ENCODE measurements at regions of chr4 and their contacts with region 1.

Region 1: DNA sequence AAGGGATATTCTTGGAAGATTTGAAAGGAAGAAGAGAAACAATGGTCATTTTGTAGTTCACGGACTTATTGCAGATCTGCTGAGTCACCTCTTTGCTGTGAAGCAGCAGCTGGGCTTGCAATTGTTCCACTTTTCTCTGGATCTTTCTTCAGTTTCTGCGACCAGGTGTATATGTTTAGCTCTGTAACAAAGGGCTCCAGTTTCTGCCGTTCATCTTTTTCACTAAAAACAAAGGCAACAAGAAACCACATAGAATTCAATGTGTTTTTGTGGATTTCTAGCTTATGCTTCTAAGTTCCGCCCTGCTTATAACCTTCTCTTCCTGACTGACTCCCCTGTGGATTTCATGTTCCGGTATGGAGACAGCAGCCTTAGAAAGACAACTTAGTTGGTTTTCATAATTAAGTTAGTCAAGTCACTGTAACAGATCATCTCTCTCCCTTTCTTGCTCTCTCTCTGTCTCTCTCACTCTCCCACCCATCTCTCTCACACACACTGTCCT is 121.6 kb upstream of the EPHA5 start:
- DNase-seq: no peak
- H3K4me3 ChIP-seq: peak overlapping the region in 1 of 3 donors; percentile 6
- H3K27ac ChIP-seq: no peak overlapping the region
- H3K4me1 ChIP-seq: no peaks in the 10 kb centered on the region
- H3K27me3 ChIP-seq: no peaks in the 10 kb centered on the region
- CTCF ChIP-seq: no peak
- POLR2A ChIP-seq: no peak

Region 2: GRCh38 chr4:64399313-64400109 is 1392.3 kb before region 1 on chr4:
- intact Hi-C with region 1: loop called (anchors 10 kb)
- DNase-seq: no peak
- H3K4me3 ChIP-seq: no peak overlapping the region
- H3K27ac ChIP-seq: no peak overlapping the region
- H3K4me1 ChIP-seq: no peaks in the 10 kb centered on the region
- H3K27me3 ChIP-seq: no peaks in the 10 kb centered on the region
- CTCF ChIP-seq: no peak
- POLR2A ChIP-seq: no peak

Region 3: GRCh38 chr4:65819192-65819591 is 27.3 kb after region 1 on chr4:
- intact Hi-C with region 1: no loop called
- DNase-seq: no peak
- H3K4me3 ChIP-seq: no peak overlapping the region
- H3K27ac ChIP-seq: no peak overlapping the region
- H3K4me1 ChIP-seq: no peaks in the 10 kb centered on the region
- H3K27me3 ChIP-seq: no peaks in the 10 kb centered on the region
- CTCF ChIP-seq: no peak
- POLR2A ChIP-seq: no peak

Region 4: GRCh38 chr4:66097172-66097670 is 305.4 kb after region 1 on chr4:
- intact Hi-C with region 1: no loop called
- DNase-seq: no peak
- H3K4me3 ChIP-seq: no peak overlapping the region
- H3K27ac ChIP-seq: no peak overlapping the region
- H3K4me1 ChIP-seq: no peaks in the 10 kb centered on the region
- H3K27me3 ChIP-seq: no peaks in the 10 kb centered on the region
- CTCF ChIP-seq: no peak
- POLR2A ChIP-seq: no peak

Measured in breast epithelium (tissue), 4 donors.